Breast epithelium (tissue), 4 donors: ENCODE measurements at regions of chr1 and their contacts with region 1.

Region 1: GRCh38 chr1:187696073-187696472 is 867.3 kb downstream of the PLA2G4A start:
- DNase-seq: no peak
- H3K4me3 ChIP-seq: no peak overlapping the region
- H3K27ac ChIP-seq: no peak overlapping the region
- H3K4me1 ChIP-seq: no peaks in the 10 kb centered on the region
- H3K27me3 ChIP-seq: no peaks in the 10 kb centered on the region
- CTCF ChIP-seq: no peak
- POLR2A ChIP-seq: no peak

Region 2: DNA sequence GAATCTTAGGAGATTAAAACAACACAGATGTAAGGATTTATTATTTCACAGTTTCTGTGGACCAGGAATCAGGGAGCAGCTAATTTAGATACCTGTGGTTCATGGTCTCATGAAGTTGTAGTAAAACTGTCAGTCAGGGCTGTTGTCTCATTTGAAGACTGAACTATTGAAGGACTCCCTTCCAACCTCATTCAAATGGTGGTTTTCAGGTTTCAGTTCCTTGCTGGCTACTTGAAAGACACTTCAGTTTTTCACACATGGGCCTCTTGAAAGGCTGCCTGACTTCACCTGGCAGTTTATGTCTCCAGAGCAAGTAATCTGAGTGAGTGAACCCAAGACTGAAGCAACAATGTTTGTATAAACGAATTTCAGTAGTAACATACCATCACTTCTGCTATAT is 48.6 kb after region 1 on chr1:
- intact Hi-C with region 1: loop called (anchors 5 kb)
- DNase-seq: no peak
- H3K4me3 ChIP-seq: no peak overlapping the region
- H3K27ac ChIP-seq: no peak overlapping the region
- H3K4me1 ChIP-seq: no peaks in the 10 kb centered on the region
- H3K27me3 ChIP-seq: no peaks in the 10 kb centered on the region
- CTCF ChIP-seq: no peak
- POLR2A ChIP-seq: no peak